Colonic mucosa (tissue), 4 donors: ENCODE measurements at regions of chr5 and their contacts with region 1.

Region 1: DNA sequence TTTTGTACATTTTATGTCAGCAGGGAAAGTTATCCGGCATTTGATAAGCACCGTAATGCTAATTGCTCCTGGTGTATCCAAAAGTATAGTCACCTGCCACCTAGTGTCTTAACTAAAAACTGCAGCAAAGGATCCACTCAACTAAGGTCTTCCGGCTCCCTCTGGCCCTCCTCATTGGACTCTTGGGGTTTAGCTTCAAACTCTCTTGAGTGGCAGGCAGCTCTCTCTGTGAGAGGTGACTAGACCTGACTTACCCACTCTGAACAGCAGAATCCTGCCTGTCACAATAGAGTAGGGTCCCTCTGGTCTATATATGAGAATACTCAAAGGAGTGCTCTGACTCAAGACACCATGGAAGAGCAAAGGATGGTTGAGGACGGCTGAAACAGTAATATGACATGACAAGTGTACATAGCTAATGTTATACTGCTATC is 60.3 kb upstream of the CAST start:
- DNase-seq: peak; percentile 78
- H3K4me3 ChIP-seq: no peak overlapping the region
- H3K27ac ChIP-seq: no peak overlapping the region
- H3K4me1 ChIP-seq: no peaks in the 10 kb centered on the region
- H3K27me3 ChIP-seq: no peaks in the 10 kb centered on the region
- CTCF ChIP-seq: peak; percentile 76

Region 2: GRCh38 chr5:95858661-95859326 is 743.0 kb before region 1 on chr5:
- intact Hi-C with region 1: loop called (anchors 5 kb)
- DNase-seq: peak; percentile 88
- H3K4me3 ChIP-seq: no peak overlapping the region
- H3K27ac ChIP-seq: peak overlapping the region; percentile 37
- H3K4me1 ChIP-seq: peaks cover 7% of the 10 kb centered on the region
- H3K27me3 ChIP-seq: no peaks in the 10 kb centered on the region
- CTCF ChIP-seq: peak; percentile 98

Region 3: DNA sequence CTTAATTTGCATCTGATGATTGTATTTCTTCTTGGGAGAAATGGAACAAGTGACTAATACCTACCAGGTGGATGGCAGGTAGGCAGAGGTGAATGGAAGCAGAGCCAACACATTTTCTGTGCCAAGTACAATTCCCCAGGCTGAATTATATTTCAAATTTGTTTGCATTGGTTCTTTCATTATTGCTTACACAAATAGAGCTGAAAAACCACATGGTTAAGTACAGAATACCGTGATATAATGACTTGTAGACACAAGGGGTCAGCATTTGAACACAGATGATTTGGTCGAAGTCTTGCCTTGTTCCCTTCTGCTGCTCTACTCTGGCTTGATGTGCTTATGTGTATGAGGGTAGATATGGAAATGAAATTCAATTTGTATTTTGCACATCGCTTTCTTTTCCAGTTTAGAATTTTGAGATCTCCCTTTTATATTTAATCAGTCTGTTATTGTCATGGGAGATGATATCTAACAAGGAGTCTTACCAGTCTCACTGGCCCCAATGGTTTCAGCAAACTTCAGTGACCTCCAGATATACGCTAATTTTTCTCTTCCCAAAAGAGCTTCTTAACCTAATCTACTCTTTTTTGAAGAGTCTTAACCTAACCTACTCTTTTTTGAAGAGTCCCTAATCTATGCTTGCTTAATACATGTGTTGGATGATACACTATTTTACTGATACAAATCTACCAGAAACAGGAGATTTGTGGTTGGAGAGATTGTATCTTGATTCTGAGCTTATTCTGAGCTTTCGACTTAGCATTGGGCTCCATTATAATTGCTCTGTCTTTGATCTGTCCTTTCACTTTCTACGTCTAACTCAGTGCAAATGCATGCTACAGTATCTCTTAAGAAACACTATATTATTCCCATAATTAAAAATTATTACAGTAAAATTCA is 256.9 kb before region 1 on chr5:
- intact Hi-C with region 1: loop called (anchors 2 kb)
- DNase-seq: peak; percentile 23
- H3K4me3 ChIP-seq: no peak overlapping the region
- H3K27ac ChIP-seq: no peak overlapping the region
- H3K4me1 ChIP-seq: no peaks in the 10 kb centered on the region
- H3K27me3 ChIP-seq: no peaks in the 10 kb centered on the region
- CTCF ChIP-seq: peak; percentile 38

Region 4: GRCh38 chr5:96714951-96715451 is 113.2 kb after region 1 on chr5:
- intact Hi-C with region 1: no loop called
- DNase-seq: peak; percentile 81
- H3K4me3 ChIP-seq: no peak overlapping the region
- H3K27ac ChIP-seq: peak overlapping the region; percentile 50
- H3K4me1 ChIP-seq: peaks cover 19% of the 10 kb centered on the region
- H3K27me3 ChIP-seq: no peaks in the 10 kb centered on the region
- CTCF ChIP-seq: no peak

Region 5: GRCh38 chr5:97383996-97384395 is 782.2 kb after region 1 on chr5:
- intact Hi-C with region 1: no loop called
- DNase-seq: no peak
- H3K4me3 ChIP-seq: no peak overlapping the region
- H3K27ac ChIP-seq: no peak overlapping the region
- H3K4me1 ChIP-seq: no peaks in the 10 kb centered on the region
- H3K27me3 ChIP-seq: no peaks in the 10 kb centered on the region
- CTCF ChIP-seq: no peak